GM12878 (cell line): ENCODE measurements at regions of chr15 and their contacts with region 1.

Region 1: GRCh38 chr15:85412956-85413854 is 32.8 kb downstream of the AKAP13 start:
- DNase-seq: peak; percentile 96
- ATAC-seq: peak; percentile 97
- H3K4me3 ChIP-seq: peak overlapping the region; percentile 33; the same call in 1 of the 2 replicates
- H3K27ac ChIP-seq: peak overlapping the region; percentile 94
- H3K4me1 ChIP-seq: peaks cover 64% of the 10 kb centered on the region
- H3K27me3 ChIP-seq: no peaks in the 10 kb centered on the region
- CTCF ChIP-seq: peak in 2 of 3 experiments; percentile 6 to 29; a peak in 3 of 6 replicates
- EP300 ChIP-seq: peak; percentile 93 to 94
- POLR2A ChIP-seq: peak; percentile 21; the same call in 1 of the 2 replicates
- RAD21 ChIP-seq: peak; percentile 32; the same call in 1 of the 2 replicates

Region 2: DNA sequence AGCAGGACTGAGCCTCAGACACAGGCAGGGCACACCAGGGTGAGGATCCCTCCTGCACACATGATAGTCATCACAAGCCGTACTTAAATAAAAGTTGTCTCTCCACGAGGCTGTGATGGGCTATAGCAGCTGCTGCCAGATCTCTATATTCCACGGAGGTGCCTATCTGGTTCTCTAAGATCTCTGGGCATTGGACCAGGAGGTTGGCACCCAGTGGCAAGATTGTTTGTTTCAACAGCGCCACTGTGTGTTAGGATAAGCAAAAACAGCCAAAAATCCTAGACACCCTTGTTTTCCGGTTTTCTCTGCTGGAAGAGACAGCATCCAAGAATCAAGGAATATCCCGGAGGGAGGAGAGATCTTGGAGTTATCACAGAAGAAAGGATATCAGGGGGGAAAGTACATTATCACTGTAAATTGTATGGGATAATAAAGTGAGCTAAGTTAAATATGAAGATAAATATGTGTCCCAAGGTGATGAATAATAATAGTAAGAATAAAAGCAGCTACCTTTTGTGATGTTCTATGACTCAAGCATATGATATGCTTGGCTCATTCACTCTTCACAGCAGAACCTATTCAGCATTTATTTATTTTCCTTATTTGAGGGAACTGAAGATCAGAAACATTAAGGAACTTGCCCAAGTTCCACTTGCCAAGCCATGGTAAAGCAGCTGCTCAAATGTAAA is 123.4 kb before region 1 on chr15:
- CTCF ChIA-PET with region 1: interaction called, 174 read pairs
- POLR2A ChIA-PET with region 1: no interaction called
- RAD21 ChIA-PET with region 1: interaction called, 10 read pairs
- SMC1A ChIA-PET with region 1: interaction called, 192 read pairs
- in situ Hi-C with region 1: no loop called
- intact Hi-C with region 1: no loop called
- DNase-seq: no peak
- ATAC-seq: peak; percentile 69
- H3K4me3 ChIP-seq: no peak overlapping the region
- H3K27ac ChIP-seq: no peak overlapping the region
- H3K4me1 ChIP-seq: peaks cover 4% of the 10 kb centered on the region
- H3K27me3 ChIP-seq: no peaks in the 10 kb centered on the region; a peak in 2 of 4 replicates
- CTCF ChIP-seq: peak; percentile 55 to 69 (median 56); a peak in 5 of 6 replicates
- EP300 ChIP-seq: no peak
- POLR2A ChIP-seq: no peak
- RAD21 ChIP-seq: peak; percentile 73

Region 3: GRCh38 chr15:85318048-85318731 is 95.0 kb before region 1 on chr15:
- CTCF ChIA-PET with region 1: interaction called, 48 read pairs
- POLR2A ChIA-PET with region 1: interaction called, 14 read pairs
- RAD21 ChIA-PET with region 1: interaction called, 112 read pairs
- SMC1A ChIA-PET with region 1: interaction called, 78 read pairs
- in situ Hi-C with region 1: no loop called
- intact Hi-C with region 1: no loop called
- DNase-seq: peak; percentile 83
- ATAC-seq: peak; percentile 97
- H3K4me3 ChIP-seq: no peak overlapping the region
- H3K27ac ChIP-seq: peak overlapping the region; percentile 60
- H3K4me1 ChIP-seq: peaks cover 32% of the 10 kb centered on the region
- H3K27me3 ChIP-seq: no peaks in the 10 kb centered on the region
- CTCF ChIP-seq: peak in 2 of 3 experiments; percentile 19 to 28; a peak in 2 of 6 replicates
- EP300 ChIP-seq: peak; percentile 96 to 97
- POLR2A ChIP-seq: no peak
- RAD21 ChIP-seq: peak; percentile 45

Region 4: DNA sequence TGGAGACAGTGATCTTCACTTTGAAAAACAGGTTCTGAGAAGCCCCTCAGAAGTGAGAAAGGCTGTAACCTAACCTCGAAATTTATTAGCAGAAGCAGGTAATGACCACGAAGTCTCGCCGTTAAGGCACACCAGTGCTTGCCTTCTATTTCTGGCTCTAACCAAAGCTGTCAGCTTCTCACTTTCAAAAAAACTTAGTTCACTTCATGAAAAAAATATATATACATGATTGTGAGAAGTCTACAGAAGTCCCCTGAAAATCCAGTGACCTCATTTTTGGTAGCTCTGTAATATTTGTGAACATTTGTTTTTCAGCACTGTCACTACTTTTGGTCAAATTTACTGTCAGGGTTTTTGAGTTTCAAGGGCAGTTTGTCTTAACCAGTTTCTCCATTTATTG is 51.9 kb before region 1 on chr15:
- CTCF ChIA-PET with region 1: interaction called, 8 read pairs
- POLR2A ChIA-PET with region 1: interaction called, 3 read pairs
- RAD21 ChIA-PET with region 1: interaction called, 32 read pairs
- SMC1A ChIA-PET with region 1: interaction called, 7 read pairs
- in situ Hi-C with region 1: no loop called
- intact Hi-C with region 1: no loop called
- DNase-seq: peak; percentile 66
- ATAC-seq: peak; percentile 87
- H3K4me3 ChIP-seq: peak overlapping the region; percentile 40; the same call in 1 of the 2 replicates
- H3K27ac ChIP-seq: peak overlapping the region; percentile 72
- H3K4me1 ChIP-seq: peaks cover 32% of the 10 kb centered on the region
- H3K27me3 ChIP-seq: no peaks in the 10 kb centered on the region
- CTCF ChIP-seq: no peak
- EP300 ChIP-seq: peak; percentile 60 to 81; a peak in 2 of 4 replicates
- POLR2A ChIP-seq: no peak
- RAD21 ChIP-seq: no peak

Region 5: DNA sequence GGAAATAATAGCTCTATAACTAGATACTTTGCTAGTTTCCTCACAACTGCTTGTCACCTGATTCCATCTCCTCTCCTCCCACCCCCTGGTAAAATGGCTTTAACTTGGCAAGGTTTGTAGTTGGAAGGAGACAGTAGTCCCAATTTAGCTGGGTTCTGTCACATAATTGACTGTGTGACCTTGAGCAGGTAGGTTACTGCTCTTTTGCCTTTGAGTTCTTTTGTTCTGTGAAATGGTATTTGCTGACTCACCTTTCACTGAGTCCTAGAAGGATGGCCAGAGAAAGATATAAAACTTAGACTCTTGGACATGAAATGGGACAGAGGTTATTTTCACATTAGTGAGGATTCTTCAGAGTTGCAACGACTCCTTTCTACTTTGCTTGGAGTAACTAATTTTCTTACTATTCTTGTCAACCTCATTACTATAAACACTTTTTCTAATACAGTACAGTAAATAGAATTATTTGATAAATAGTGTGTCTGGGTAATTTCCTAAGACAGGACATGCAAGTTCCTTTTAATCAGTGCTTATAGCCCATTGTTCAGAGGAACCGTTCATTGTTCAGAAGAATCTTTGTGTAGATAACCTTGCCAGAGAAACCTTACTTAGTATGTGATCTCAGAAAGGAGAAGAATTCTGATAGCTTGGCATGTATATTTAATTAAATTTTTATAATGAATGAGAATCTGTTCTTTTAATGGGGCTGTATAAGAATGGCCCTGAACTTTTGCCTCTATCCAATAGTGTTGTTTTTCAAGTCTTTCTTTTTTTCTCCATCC is 18.5 kb before region 1 on chr15:
- CTCF ChIA-PET with region 1: interaction called, 109 read pairs
- POLR2A ChIA-PET with region 1: interaction called, 4 read pairs
- RAD21 ChIA-PET with region 1: interaction called, 93 read pairs
- SMC1A ChIA-PET with region 1: interaction called, 89 read pairs
- in situ Hi-C with region 1: no loop called
- intact Hi-C with region 1: no loop called
- DNase-seq: no peak
- ATAC-seq: no peak
- H3K4me3 ChIP-seq: no peak overlapping the region
- H3K27ac ChIP-seq: no peak overlapping the region
- H3K4me1 ChIP-seq: no peaks in the 10 kb centered on the region
- H3K27me3 ChIP-seq: no peaks in the 10 kb centered on the region
- CTCF ChIP-seq: no peak
- EP300 ChIP-seq: no peak
- POLR2A ChIP-seq: no peak
- RAD21 ChIP-seq: no peak

Region 6: DNA sequence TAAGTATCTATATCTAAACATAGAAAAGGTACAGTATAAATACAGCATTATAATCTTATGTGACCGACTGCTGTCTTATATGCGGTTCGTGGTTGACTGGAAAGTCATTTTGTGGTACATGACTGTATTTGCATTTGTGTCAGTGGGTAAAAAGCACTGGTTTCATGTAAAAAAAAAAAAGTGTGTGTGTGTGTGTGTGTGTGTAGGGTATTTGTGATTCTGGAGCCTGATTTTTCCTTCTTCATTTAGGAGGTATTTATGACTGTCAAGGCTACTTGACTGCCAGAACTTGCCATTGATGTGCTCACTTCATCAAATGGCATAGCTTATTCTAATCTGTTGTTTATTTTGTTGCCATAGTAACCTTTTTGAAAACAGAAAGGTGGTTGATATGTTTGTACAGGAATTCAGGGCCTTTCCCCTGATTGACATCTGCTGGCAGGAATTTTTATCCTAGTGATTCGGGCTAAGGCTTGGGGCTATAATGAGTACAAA is 30.4 kb after region 1 on chr15:
- CTCF ChIA-PET with region 1: interaction called, 18 read pairs
- POLR2A ChIA-PET with region 1: interaction called, 7 read pairs
- RAD21 ChIA-PET with region 1: interaction called, 22 read pairs
- SMC1A ChIA-PET with region 1: interaction called, 73 read pairs
- in situ Hi-C with region 1: no loop called
- intact Hi-C with region 1: no loop called
- DNase-seq: peak; percentile 76
- ATAC-seq: peak; percentile 90
- H3K4me3 ChIP-seq: no peak overlapping the region
- H3K27ac ChIP-seq: peak overlapping the region; percentile 66; the same call in 1 of the 2 replicates
- H3K4me1 ChIP-seq: peaks cover 28% of the 10 kb centered on the region
- H3K27me3 ChIP-seq: no peaks in the 10 kb centered on the region
- CTCF ChIP-seq: no peak
- EP300 ChIP-seq: peak; percentile 68 to 89; a peak in 3 of 4 replicates
- POLR2A ChIP-seq: no peak
- RAD21 ChIP-seq: no peak

Region 7: DNA sequence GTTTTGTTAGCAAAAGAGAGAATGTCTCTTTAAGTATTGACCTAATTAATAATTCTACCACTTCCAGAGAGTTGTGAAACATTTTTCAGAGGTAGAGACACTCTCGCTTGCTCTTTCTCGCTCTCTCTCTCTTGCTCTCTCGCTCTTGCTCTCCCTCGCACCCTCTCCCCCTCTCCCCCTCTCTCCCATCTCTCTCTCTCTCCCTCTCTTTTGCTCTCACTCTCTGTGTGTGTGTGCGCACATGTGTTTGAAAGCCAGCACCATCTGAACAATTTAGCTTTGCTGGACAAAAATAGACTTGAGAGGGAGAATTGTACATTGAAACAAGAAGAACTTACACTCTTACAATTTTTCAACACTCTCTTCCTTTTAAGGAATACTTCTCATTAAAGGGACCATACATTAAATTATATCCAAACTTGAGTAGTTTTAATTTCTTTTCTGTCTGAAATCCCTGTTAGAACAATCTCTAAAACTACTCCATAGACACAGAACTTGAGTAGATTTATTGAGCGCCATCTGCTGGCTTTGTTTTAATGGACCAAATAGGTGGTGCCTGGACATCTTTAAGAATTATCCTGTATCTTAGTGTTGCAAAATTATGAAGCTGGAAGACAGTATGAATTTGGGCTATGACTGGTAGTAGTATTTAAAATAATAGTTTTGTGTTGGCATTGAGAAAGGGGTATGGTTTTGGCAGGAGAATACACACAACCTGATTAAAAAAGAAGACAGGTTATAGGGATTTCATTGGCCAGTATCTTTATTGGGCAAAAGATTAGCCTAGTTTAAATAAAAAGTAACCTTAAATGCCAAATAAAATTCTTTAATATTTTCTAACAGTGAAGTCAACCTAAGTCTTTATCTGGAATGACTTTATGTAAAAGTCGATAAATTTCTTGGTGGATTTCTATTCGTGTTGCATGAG is 91.8 kb after region 1 on chr15:
- CTCF ChIA-PET with region 1: interaction called, 41 read pairs
- POLR2A ChIA-PET with region 1: interaction called, 4 read pairs
- RAD21 ChIA-PET with region 1: interaction called, 40 read pairs
- SMC1A ChIA-PET with region 1: interaction called, 18 read pairs
- in situ Hi-C with region 1: no loop called
- intact Hi-C with region 1: no loop called
- DNase-seq: no peak
- ATAC-seq: peak; percentile 86
- H3K4me3 ChIP-seq: no peak overlapping the region
- H3K27ac ChIP-seq: no peak overlapping the region
- H3K4me1 ChIP-seq: peaks cover 18% of the 10 kb centered on the region
- H3K27me3 ChIP-seq: no peaks in the 10 kb centered on the region
- CTCF ChIP-seq: peak; percentile 38 to 59 (median 55); a peak in 5 of 6 replicates
- EP300 ChIP-seq: no peak
- POLR2A ChIP-seq: no peak
- RAD21 ChIP-seq: peak; percentile 63